ENCODE measurements at regions of chr19 and their contacts with region 1.

Region 1: GRCh38 chr19:58154679-58155648 is 4.4 kb upstream of the ZNF329 start:
- DNase-seq: peak; percentile 92 to 100 (median 98)
- ATAC-seq: peak; percentile 98
- H3K4me3 ChIP-seq: peak overlapping the region; percentile 97
- H3K4me3 Mint-ChIP-seq: peak overlapping the region; percentile 72 to 90 (median 84)
- H3K27ac ChIP-seq: peak overlapping the region; percentile 99
- H3K27ac Mint-ChIP-seq: peak overlapping the region; percentile 52 to 80 (median 73)
- H3K4me1 ChIP-seq: peaks cover 8 to 13% of the 10 kb centered on the region in 2 donors
- H3K4me1 Mint-ChIP-seq: peaks cover 6 to 33% (median 19%) of the 10 kb centered on the region in 7 donors
- H3K27me3 ChIP-seq: no peaks in the 10 kb centered on the region
- H3K27me3 Mint-ChIP-seq: no peaks in the 10 kb centered on the region

Region 2: DNA sequence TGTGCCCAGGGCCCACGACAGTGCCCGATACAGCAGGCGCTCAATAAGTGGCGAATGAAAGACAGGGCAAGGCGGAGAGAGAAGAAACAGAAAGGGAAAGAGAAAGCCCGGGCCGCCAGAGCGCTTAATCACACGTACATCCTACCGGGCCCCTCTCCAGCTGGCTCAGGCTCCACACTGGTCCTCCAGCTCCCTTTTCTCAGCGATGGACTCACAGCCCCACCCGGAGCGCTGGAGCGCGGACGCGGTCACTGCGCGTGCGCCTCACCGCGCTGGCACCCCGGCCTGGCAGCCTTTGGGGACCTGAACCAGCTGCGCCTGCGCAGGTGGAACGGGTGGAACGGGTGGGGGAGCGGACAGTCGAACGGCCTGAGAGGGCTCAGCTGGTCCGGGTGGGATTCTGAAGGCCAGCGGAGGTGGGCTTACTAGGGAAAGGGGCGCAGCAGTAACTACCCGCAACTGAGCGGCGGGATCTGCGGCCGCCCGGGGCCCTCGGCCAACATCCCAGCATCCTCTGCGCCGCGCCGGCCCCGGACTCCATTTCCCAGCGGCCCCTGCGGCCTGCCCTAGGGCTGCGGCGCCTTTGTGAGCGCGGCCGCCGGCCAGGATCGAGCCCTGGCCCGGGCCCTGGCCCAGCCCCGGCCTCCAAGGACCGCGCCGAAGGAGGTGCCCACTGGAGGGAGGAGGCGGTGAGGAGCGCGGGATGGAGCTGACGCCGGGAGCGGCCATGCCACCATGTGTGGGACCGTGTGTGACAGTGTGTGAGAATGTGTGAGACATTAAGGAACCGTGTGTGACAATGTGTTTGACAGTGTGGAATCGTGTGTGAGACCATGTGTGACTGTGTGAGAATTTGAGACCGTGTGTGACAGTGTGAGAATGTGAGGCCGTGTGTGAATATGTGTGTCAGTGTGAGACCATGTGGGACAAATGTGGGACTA is 1750.9 kb before region 1 on chr19 and contains the start of gene ZNF583:
- CTCF ChIA-PET with region 1: no interaction called
- POLR2A ChIA-PET with region 1: no interaction called
- intact Hi-C with region 1: loop called in 1 of 2 experiments (anchors 5 kb)
- DNase-seq: peak; percentile 82 to 93 (median 90)
- ATAC-seq: peak; percentile 93
- H3K4me3 ChIP-seq: peak within 1 kb of the TSS; percentile 86
- H3K4me3 Mint-ChIP-seq: peak within 1 kb of the TSS; percentile 87 to 98 (median 94)
- H3K27ac ChIP-seq: peak within 1 kb of the TSS; percentile 96
- H3K27ac Mint-ChIP-seq: peak within 1 kb of the TSS; percentile 80 to 98 (median 95)
- H3K4me1 ChIP-seq: peaks cover 8 to 16% of the 10 kb centered on the region in 2 donors
- H3K4me1 Mint-ChIP-seq: peaks cover 19 to 37% (median 30%) of the 10 kb centered on the region in 7 donors
- H3K27me3 ChIP-seq: no peaks in the 10 kb centered on the region
- H3K27me3 Mint-ChIP-seq: no peaks in the 10 kb centered on the region
- total RNA-seq, gene ZNF583: 2.4 to 14.3 (median 3.1) TPM

Region 3: GRCh38 chr19:57410877-57411671 is 743.9 kb before region 1 on chr19 and contains the start of gene ZNF17:
- CTCF ChIA-PET with region 1: interaction called, 4 read pairs
- POLR2A ChIA-PET with region 1: interaction called, 3 read pairs
- intact Hi-C with region 1: loop called in 1 of 2 experiments (anchors 1 kb)
- DNase-seq: peak; percentile 72 to 95 (median 88)
- ATAC-seq: peak; percentile 100
- H3K4me3 ChIP-seq: peak within 1 kb of the TSS; percentile 80
- H3K4me3 Mint-ChIP-seq: peak within 1 kb of the TSS; percentile 85 to 97 (median 96)
- H3K27ac ChIP-seq: peak within 1 kb of the TSS; percentile 80
- H3K27ac Mint-ChIP-seq: peak within 1 kb of the TSS; percentile 78 to 96 (median 92)
- H3K4me1 ChIP-seq: peaks cover 3 to 8% of the 10 kb centered on the region in 2 donors
- H3K4me1 Mint-ChIP-seq: peaks cover 20 to 46% (median 34%) of the 10 kb centered on the region in 7 donors
- H3K27me3 ChIP-seq: no peaks in the 10 kb centered on the region
- H3K27me3 Mint-ChIP-seq: no peaks in the 10 kb centered on the region
- total RNA-seq, gene ZNF17: 9.3 to 27.8 (median 17.2) TPM

Region 4: DNA sequence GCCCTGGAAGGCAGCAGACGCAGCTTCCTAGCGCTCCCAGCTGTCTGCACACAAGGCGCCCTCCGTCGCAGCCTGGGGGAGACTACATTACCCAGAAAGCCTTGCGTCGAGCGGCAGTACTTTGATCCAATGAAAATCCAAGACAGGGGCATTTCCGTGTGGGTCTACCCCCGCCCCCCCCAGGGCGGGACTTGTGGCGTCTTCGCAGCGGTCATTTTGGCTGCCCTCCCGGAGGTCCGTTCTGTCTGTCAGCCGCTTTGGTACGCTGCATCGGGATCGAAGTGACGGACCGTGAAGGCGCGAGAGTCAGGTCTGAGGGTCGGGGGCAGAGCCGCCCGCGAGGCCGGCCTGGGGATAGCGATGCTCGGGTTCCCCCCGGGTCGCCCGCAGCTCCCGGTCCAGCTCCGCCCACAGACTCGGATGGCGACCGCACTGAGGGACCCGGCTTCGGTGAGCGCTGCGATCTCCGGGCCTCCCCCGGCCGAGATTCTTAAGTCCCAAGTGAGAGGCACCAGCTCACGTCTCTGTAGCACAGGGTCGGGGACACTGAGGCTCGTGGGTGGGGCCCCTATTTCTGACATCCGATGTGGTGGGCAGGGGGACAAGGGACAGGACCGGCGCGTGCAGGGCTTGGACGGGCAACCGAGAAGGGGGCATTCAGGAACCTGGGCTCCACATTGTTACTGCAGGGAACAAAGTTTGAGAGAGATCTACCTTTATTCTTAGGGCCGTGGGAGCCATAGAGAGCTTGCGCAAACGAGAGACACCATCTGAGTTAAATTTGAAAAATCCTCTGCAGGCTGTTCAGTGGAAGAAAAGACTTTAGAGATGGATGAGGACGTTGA is 521.8 kb before region 1 on chr19 and contains the start of gene ZNF211:
- CTCF ChIA-PET with region 1: interaction called, 6 read pairs
- POLR2A ChIA-PET with region 1: no interaction called
- intact Hi-C with region 1: loop called in 1 of 2 experiments (anchors 1 kb)
- DNase-seq: peak; percentile 74 to 89 (median 86)
- ATAC-seq: peak; percentile 100
- H3K4me3 ChIP-seq: peak within 1 kb of the TSS; percentile 87
- H3K4me3 Mint-ChIP-seq: peak within 1 kb of the TSS; percentile 87 to 97 (median 94)
- H3K27ac ChIP-seq: peak within 1 kb of the TSS; percentile 90
- H3K27ac Mint-ChIP-seq: peak within 1 kb of the TSS; percentile 81 to 97 (median 89)
- H3K4me1 ChIP-seq: peaks cover 3 to 13% of the 10 kb centered on the region in 2 donors
- H3K4me1 Mint-ChIP-seq: peaks cover 21 to 36% (median 28%) of the 10 kb centered on the region in 7 donors
- H3K27me3 ChIP-seq: no peaks in the 10 kb centered on the region
- H3K27me3 Mint-ChIP-seq: no peaks in the 10 kb centered on the region
- total RNA-seq, gene ZNF211: 18.0 to 56.7 (median 33.7) TPM

Region 5: GRCh38 chr19:57914531-57914930 is 240.4 kb before region 1 on chr19:
- CTCF ChIA-PET with region 1: no interaction called
- POLR2A ChIA-PET with region 1: no interaction called
- intact Hi-C with region 1: loop called in 1 of 2 experiments (anchors 1 kb)
- DNase-seq: no peak
- ATAC-seq: no peak
- H3K4me3 ChIP-seq: peak overlapping the region; percentile 43
- H3K4me3 Mint-ChIP-seq: peak overlapping the region; percentile 93 to 99 (median 97)
- H3K27ac ChIP-seq: no peak overlapping the region
- H3K27ac Mint-ChIP-seq: peak overlapping the region in 5 of 9 donors; percentile 6 to 73 (median 47)
- H3K4me1 ChIP-seq: peaks cover 9 to 10% of the 10 kb centered on the region in 2 donors
- H3K4me1 Mint-ChIP-seq: peaks cover 21 to 39% (median 36%) of the 10 kb centered on the region in 7 donors
- H3K27me3 ChIP-seq: no peaks in the 10 kb centered on the region
- H3K27me3 Mint-ChIP-seq: no peaks in the 10 kb centered on the region

Region 6: DNA sequence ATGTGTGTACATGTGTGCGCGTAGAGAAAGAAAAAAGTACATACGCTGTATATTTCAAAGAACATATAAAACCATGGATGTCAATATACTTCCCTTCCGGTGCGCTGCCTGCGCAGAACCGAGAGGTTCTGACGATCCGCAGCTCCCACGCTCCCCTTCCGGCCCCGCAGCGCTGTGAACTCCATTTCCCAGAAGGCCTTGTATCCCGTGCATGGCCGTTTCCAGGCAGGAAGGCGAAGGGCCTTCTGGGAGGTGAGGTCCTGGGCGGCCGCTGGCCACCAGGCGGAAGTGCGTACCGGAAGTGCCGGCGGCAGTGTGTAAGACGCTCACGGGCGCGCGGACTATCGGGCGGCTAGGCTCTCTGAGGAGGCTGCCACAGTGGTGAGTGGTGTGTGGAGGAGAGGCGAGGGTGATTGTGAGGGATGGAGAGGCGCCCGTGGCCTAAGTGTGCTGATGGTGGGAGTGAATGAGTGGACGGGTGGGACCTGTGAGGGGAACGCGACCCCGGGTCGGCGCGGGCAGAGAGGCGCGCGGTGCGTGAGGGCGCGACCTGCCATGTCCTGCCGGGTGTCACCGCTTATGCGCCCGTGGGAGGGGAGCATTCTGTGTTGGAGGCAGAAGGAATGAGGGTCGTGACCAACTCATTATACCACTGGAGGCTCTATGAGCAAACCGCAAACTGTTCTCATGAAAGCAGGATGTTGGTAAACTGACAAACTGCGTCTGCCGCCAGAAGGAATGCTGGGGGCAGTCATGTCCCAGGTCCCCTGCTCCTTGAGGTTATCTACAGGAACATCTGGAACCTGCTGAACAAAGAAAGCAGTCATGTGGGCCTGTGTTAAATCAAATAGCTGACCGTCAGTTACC is 150.3 kb after region 1 on chr19 and contains the start of gene ERVK3-1:
- CTCF ChIA-PET with region 1: no interaction called
- POLR2A ChIA-PET with region 1: no interaction called
- intact Hi-C with region 1: loop called (anchors 1 kb)
- DNase-seq: peak; percentile 80 to 95 (median 93)
- ATAC-seq: peak; percentile 99
- H3K4me3 ChIP-seq: peak within 1 kb of the TSS; percentile 69
- H3K4me3 Mint-ChIP-seq: peak within 1 kb of the TSS; percentile 94 to 100 (median 98)
- H3K27ac ChIP-seq: peak within 1 kb of the TSS; percentile 91
- H3K27ac Mint-ChIP-seq: peak within 1 kb of the TSS; percentile 98 to 100 (median 99)
- H3K4me1 ChIP-seq: peaks cover 14 to 20% of the 10 kb centered on the region in 2 donors
- H3K4me1 Mint-ChIP-seq: peaks cover 33 to 64% (median 55%) of the 10 kb centered on the region in 7 donors
- H3K27me3 ChIP-seq: no peaks in the 10 kb centered on the region
- H3K27me3 Mint-ChIP-seq: no peaks in the 10 kb centered on the region
- total RNA-seq, gene ERVK3-1: 59.7 to 122 (median 65.4) TPM

Region 7: GRCh38 chr19:58572818-58573657 is 418.1 kb after region 1 on chr19 and contains the start of gene MZF1:
- CTCF ChIA-PET with region 1: no interaction called
- POLR2A ChIA-PET with region 1: no interaction called
- intact Hi-C with region 1: no loop called
- DNase-seq: peak; percentile 97 to 100 (median 100)
- ATAC-seq: peak; percentile 81
- H3K4me3 ChIP-seq: peak within 1 kb of the TSS; percentile 71
- H3K4me3 Mint-ChIP-seq: peak within 1 kb of the TSS; percentile 82 to 100 (median 98)
- H3K27ac ChIP-seq: peak within 1 kb of the TSS; percentile 97
- H3K27ac Mint-ChIP-seq: peak within 1 kb of the TSS; percentile 97 to 100 (median 100)
- H3K4me1 ChIP-seq: peaks cover 19 to 20% of the 10 kb centered on the region in 2 donors
- H3K4me1 Mint-ChIP-seq: peaks cover 27 to 50% (median 33%) of the 10 kb centered on the region in 7 donors
- H3K27me3 ChIP-seq: no peaks in the 10 kb centered on the region
- H3K27me3 Mint-ChIP-seq: peaks cover 0 to 4% (median 0%) of the 10 kb centered on the region in 5 donors
- total RNA-seq, gene MZF1: 35.0 to 51.8 (median 44.9) TPM

Measured in naive thymus-derived CD4-positive, alpha-beta T cell (primary cell).